Sigmoid colon (tissue), 7 donors: ENCODE measurements at regions of chr4 and their contacts with region 1.

Region 1: DNA sequence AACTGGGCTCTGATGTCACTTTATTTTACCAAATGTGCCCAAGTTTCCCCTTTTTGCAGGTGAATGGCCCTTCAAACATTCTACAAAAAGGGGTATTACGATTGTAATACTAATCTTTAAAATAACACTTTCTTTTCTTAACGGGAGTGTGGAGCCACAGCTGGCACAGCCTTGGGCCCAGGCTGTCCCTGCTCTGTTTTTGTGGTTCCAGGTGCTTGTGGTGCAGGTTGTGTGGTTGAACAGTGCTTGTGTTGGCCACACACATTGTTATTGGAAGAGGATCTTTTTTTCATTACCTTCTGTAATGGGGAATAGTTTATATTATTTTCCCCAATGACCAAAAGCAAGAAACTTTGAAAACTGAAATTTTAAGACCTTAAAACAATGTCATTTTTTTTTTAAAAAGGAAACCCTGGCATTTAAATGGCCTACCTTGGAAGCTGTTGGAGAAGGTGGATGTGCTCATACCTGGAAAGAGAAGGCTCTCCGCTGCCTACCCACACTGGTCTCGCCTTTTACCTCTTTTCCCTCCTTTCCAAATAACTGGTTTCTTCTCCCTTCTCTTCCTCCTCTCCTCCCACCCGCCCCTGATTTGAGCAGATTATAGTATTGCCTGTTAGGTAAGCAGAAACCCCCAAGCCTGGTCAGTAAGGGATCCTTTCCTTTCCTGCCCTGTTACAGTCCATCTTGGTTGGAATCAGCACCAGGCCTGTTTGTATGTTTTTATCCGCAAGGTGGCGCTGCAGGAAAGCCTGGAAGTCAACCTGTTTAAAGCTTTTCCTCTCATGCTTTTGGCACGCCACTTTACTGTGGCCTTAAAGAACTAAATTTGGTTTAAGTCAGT is 28.6 kb downstream of the HADH start:
- DNase-seq: peak; percentile 84
- H3K4me3 ChIP-seq: no peak overlapping the region
- H3K27ac ChIP-seq: no peak overlapping the region
- H3K4me1 ChIP-seq: no peaks in the 10 kb centered on the region
- H3K27me3 ChIP-seq: no peaks in the 10 kb centered on the region
- CTCF ChIP-seq: peak; percentile 43 to 80 (median 76)
- EP300 ChIP-seq: no peak
- POLR2A ChIP-seq: no peak

Region 2: DNA sequence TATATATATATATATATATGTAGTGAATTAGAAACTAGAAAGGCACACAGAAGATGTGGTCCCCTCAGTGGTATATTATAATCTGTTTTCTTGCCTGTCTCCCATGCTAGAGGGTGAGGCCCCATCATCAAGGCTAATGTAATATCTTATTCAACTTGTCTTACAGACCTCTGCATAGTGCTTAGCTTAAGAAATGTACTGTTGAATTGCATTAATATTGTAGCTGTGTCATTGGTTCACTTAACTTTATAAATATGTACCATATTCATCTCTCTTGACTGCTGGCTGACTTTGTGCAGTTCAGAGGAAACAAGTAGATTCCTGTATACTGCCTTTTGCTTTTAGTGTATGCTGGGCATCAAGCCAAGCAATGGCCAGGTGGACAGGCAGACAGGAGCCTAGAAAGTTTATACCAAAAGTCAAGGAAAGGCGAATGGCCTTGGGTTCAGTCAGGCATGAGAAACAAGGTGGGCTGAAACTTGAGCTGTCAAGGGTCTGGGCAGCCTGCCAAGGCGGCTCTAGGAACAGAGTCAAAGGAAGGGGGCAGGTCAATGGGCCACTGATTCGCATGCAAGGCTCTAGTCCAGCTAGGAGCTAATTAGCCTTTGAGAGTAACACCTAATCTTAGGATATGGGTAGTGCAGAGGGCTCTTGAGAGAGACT is 229.3 kb after region 1 on chr4:
- intact Hi-C with region 1: no loop called
- DNase-seq: no peak
- H3K4me3 ChIP-seq: no peak overlapping the region
- H3K27ac ChIP-seq: no peak overlapping the region
- H3K4me1 ChIP-seq: no peaks in the 10 kb centered on the region
- H3K27me3 ChIP-seq: no peaks in the 10 kb centered on the region
- CTCF ChIP-seq: no peak
- EP300 ChIP-seq: no peak
- POLR2A ChIP-seq: no peak

Region 3: DNA sequence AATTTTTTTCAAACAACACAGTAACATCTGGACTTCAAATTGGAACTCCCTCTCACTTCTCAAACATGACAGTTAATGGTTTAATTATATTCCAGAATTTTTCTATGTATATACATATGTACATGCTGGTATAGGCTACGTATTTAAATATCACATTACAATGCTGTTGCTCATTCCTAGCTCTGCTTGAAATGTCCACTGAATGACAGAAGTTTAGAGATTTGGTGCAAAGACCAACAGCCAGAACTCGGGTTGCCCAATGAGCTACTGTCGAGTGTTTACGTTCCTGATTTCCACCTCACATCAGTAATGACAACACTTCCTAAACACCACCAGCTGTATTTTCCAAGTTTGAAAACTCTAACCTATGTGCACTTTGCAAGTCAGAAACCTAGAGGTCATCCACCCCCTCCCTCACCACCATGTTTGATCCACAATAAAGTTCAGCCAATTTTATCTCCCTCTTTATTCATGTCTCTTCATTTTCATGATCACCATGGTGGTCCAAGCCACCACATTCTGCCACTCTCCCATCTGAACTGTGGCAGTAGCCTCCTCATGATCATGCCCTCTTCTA is 552.8 kb after region 1 on chr4:
- intact Hi-C with region 1: loop called (anchors 2 kb)
- DNase-seq: no peak
- H3K4me3 ChIP-seq: no peak overlapping the region
- H3K27ac ChIP-seq: no peak overlapping the region
- H3K4me1 ChIP-seq: no peaks in the 10 kb centered on the region
- H3K27me3 ChIP-seq: peaks cover 0 to 5% (median 0%) of the 10 kb centered on the region in 3 donors
- CTCF ChIP-seq: no peak
- EP300 ChIP-seq: no peak
- POLR2A ChIP-seq: no peak